Heart left ventricle (tissue), 16 donors: ENCODE measurements at regions of chr1 and their contacts with region 1.

Region 1: GRCh38 chr1:161298116-161298515 is 11.7 kb downstream of the MPZ start:
- DNase-seq: no peak
- ATAC-seq: no peak
- H3K4me3 ChIP-seq: no peak overlapping the region
- H3K27ac ChIP-seq: peak overlapping the region in 1 of 12 donors; percentile 6
- H3K4me1 ChIP-seq: peaks cover 0 to 13% (median 0%) of the 10 kb centered on the region in 12 donors
- H3K27me3 ChIP-seq: no peaks in the 10 kb centered on the region
- CTCF ChIP-seq: no peak
- POLR2A ChIP-seq: no peak

Region 2: GRCh38 chr1:161359291-161359690 is 61.2 kb after region 1 on chr1:
- intact Hi-C with region 1: loop called in 1 of 10 experiments (anchors 5 kb)
- DNase-seq: no peak
- ATAC-seq: peak in 3 of 4 donors; percentile 49 to 82 (median 58)
- H3K4me3 ChIP-seq: no peak overlapping the region
- H3K27ac ChIP-seq: peak overlapping the region in 4 of 12 donors; percentile 8 to 90 (median 33)
- H3K4me1 ChIP-seq: peaks cover 0 to 18% (median 6%) of the 10 kb centered on the region in 12 donors
- H3K27me3 ChIP-seq: no peaks in the 10 kb centered on the region
- CTCF ChIP-seq: no peak
- POLR2A ChIP-seq: no peak